BJ (cell line): ENCODE measurements at regions of chrX and their contacts with region 1.

Region 1: DNA sequence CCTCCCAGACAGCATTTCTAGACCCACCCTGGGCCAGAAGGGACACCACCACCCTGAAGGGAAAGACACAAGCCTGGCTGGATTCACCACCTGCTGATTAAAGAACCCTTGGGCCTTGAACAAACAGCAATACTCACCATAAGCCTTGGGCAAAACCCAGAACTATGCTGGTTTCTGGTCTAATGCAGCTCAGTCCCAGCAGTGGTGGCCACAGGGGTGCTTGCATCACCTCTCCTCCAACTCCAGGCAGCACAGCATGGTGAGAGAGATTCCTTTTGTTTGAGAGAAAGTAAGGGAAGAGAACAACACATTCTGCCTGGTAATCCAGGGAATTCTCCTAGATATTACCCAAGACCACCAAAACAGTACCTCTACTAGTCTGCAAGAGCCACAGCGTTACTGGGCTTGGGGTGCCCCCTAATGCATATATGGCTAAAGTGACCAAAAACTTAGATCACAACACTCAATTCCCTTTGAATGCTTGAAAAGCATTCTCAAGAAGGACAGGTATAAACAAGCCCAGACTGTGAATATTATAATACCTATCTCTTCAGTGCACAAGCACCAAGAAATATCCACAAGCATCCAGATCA is 25.7 kb downstream of the RNF128 start:
- DNase-seq: no peak
- H3K4me3 ChIP-seq: no peak overlapping the region
- H3K27me3 ChIP-seq: no peaks in the 10 kb centered on the region
- CTCF ChIP-seq: peak; percentile 28; the same call in 1 of the 2 replicates

Region 2: GRCh38 chrX:106481341-106481740 is 270.8 kb before region 1 on chrX:
- CTCF ChIA-PET with region 1: interaction called, 14 read pairs
- POLR2A ChIA-PET with region 1: no interaction called
- DNase-seq: no peak
- H3K4me3 ChIP-seq: no peak overlapping the region
- H3K27me3 ChIP-seq: no peaks in the 10 kb centered on the region
- CTCF ChIP-seq: peak; percentile 52

Region 3: DNA sequence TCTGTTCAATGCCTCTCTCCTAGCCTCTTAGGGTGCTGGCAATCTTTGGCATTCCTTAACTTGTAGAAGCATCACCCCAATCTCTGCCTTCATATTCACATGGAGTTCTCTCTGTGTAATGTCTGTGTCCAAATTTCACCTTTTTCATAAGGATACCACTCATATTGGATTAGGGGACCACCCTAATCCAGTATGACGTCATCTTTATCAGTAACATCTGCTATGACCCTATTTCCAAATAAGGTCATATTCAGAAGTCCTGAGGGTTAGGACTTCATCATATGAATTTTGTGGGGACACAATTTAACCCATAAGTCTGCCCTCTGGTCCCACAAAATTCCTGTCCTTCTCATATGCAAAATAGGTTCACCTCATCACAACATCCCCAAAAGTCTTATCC is 111.2 kb before region 1 on chrX:
- CTCF ChIA-PET with region 1: no interaction called
- POLR2A ChIA-PET with region 1: no interaction called
- DNase-seq: no peak
- H3K4me3 ChIP-seq: no peak overlapping the region
- H3K27me3 ChIP-seq: no peaks in the 10 kb centered on the region
- CTCF ChIP-seq: no peak